Ovary (tissue), 10 donors: ENCODE measurements at regions of chr21 and their contacts with region 1.

Region 1: GRCh38 chr21:39601187-39601928 is 11.4 kb upstream of the B3GALT5 start:
- DNase-seq: no peak
- H3K4me3 ChIP-seq: no peak overlapping the region
- H3K27ac ChIP-seq: no peak overlapping the region
- H3K4me1 ChIP-seq: no peaks in the 10 kb centered on the region
- H3K27me3 ChIP-seq: no peaks in the 10 kb centered on the region
- CTCF ChIP-seq: no peak
- EP300 ChIP-seq: no peak
- POLR2A ChIP-seq: no peak

Region 2: GRCh38 chr21:39137248-39138178 is 463.8 kb before region 1 on chr21:
- intact Hi-C with region 1: no loop called
- DNase-seq: peak in 4 of 5 donors; percentile 42 to 68 (median 54)
- H3K4me3 ChIP-seq: no peak overlapping the region
- H3K27ac ChIP-seq: peak overlapping the region; percentile 19 to 56
- H3K4me1 ChIP-seq: no peaks in the 10 kb centered on the region
- H3K27me3 ChIP-seq: no peaks in the 10 kb centered on the region
- CTCF ChIP-seq: no peak
- EP300 ChIP-seq: no peak
- POLR2A ChIP-seq: no peak

Region 3: DNA sequence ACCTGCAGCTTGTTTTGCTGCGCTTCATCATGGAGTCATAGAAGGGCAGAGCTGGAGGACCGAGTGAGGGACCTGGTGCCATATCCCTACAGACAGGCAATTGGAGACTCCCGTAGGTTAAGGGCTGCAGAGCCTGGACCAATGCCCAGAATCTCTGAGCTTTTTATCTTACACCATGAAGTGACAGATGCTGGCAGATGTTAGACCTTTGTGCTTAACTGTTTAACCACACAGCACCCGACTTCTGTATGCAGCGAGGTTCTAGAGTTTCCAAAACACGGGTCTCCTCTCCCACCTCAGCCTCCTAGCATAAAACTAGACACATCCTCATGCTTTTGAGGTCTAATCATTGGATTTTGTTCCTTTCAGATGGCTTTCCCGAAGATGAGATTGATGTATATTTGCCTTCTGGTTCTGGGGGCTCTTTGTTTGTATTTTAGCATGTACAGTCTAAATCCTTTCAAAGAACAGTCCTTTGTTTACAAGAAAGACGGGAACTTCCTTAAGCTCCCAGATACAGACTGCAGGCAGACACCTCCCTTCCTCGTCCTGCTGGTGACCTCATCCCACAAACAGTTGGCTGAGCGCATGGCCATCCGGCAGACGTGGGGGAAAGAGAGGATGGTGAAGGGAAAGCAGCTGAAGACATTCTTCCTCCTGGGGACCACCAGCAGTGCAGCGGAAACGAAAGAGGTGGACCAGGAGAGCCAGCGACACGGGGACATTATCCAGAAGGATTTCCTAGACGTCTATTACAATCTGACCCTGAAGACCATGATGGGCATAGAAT is 59.0 kb after region 1 on chr21:
- intact Hi-C with region 1: loop called in 1 of 4 experiments (anchors 10 kb)
- DNase-seq: peak in 2 of 5 donors; percentile 31 to 43
- H3K4me3 ChIP-seq: no peak overlapping the region
- H3K27ac ChIP-seq: no peak overlapping the region
- H3K4me1 ChIP-seq: no peaks in the 10 kb centered on the region
- H3K27me3 ChIP-seq: no peaks in the 10 kb centered on the region
- CTCF ChIP-seq: no peak
- EP300 ChIP-seq: no peak
- POLR2A ChIP-seq: no peak